ENCODE measurements at regions of chr10 and their contacts with region 1.

Region 1: DNA sequence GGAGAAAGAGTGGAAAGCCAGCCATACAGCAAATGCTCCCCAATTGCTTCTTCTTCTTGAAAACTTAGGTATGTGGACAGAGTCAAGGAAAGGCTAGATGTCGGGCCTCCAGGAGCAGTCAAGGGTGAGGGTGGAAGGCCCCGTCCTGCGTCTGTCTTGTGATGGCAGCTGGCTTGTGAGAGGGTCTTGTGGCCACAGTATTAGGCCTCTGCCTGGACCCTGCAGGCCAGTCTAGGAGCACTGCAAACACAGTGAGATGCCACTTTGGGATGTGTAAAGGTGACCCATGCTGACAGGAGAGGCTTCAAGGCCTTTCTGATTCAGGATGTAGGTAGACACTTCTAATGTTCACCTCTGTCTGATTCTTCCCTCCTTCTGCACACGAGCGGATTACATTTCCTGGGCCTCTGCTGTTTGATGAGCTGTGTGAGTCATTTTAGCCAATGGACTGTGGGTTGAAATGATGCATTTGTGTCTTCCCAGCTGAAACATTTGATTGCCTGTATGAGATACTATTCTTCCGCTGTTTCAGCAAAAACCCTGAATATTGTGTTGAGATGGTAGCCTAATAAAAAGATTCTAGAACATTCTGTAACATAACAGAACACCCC is 135.4 kb downstream of the EMX2 start:
- DNase-seq: no peak
- H3K4me3 Mint-ChIP-seq: no peak overlapping the region
- H3K27ac Mint-ChIP-seq: no peak overlapping the region
- H3K4me1 Mint-ChIP-seq: peaks cover 3% of the 10 kb centered on the region
- H3K27me3 Mint-ChIP-seq: peaks cover 12% of the 10 kb centered on the region

Region 2: GRCh38 chr10:117635826-117636225 is 42.2 kb before region 1 on chr10:
- intact Hi-C with region 1: loop called (anchors 5 kb)
- DNase-seq: no peak
- H3K4me3 Mint-ChIP-seq: no peak overlapping the region
- H3K27ac Mint-ChIP-seq: no peak overlapping the region
- H3K4me1 Mint-ChIP-seq: no peaks in the 10 kb centered on the region
- H3K27me3 Mint-ChIP-seq: peaks cover 30% of the 10 kb centered on the region

Region 3: GRCh38 chr10:117663750-117664149 is 14.2 kb before region 1 on chr10:
- intact Hi-C with region 1: no loop called
- DNase-seq: peak; percentile 71
- H3K4me3 Mint-ChIP-seq: no peak overlapping the region
- H3K27ac Mint-ChIP-seq: peak overlapping the region; percentile 46
- H3K4me1 Mint-ChIP-seq: peaks cover 1% of the 10 kb centered on the region
- H3K27me3 Mint-ChIP-seq: peaks cover 15% of the 10 kb centered on the region